Ascending aorta (tissue), 2 donors: ENCODE measurements at regions of chr5 and their contacts with region 1.

Region 1: GRCh38 chr5:44536650-44537260 is 147.5 kb upstream of the FGF10 start:
- DNase-seq: no peak
- H3K4me3 ChIP-seq: no peak overlapping the region
- H3K27ac ChIP-seq: no peak overlapping the region
- H3K4me1 ChIP-seq: no peaks in the 10 kb centered on the region
- H3K27me3 ChIP-seq: no peaks in the 10 kb centered on the region
- CTCF ChIP-seq: peak in 2 of 3 experiments; percentile 29 to 51

Region 2: GRCh38 chr5:44506561-44506960 is 30.2 kb before region 1 on chr5:
- intact Hi-C with region 1: no loop called
- DNase-seq: no peak
- H3K4me3 ChIP-seq: no peak overlapping the region
- H3K27ac ChIP-seq: no peak overlapping the region
- H3K4me1 ChIP-seq: no peaks in the 10 kb centered on the region
- H3K27me3 ChIP-seq: no peaks in the 10 kb centered on the region
- CTCF ChIP-seq: no peak

Region 3: GRCh38 chr5:44774279-44774880 is 237.6 kb after region 1 on chr5:
- intact Hi-C with region 1: loop called (anchors 5 kb)
- DNase-seq: no peak
- H3K4me3 ChIP-seq: no peak overlapping the region
- H3K27ac ChIP-seq: no peak overlapping the region
- H3K4me1 ChIP-seq: no peaks in the 10 kb centered on the region
- H3K27me3 ChIP-seq: no peaks in the 10 kb centered on the region
- CTCF ChIP-seq: peak; percentile 10 to 54 (median 31)

Region 4: GRCh38 chr5:45793638-45794532 is 1257.1 kb after region 1 on chr5:
- intact Hi-C with region 1: no loop called
- DNase-seq: no peak
- H3K4me3 ChIP-seq: no peak overlapping the region
- H3K27ac ChIP-seq: no peak overlapping the region
- H3K4me1 ChIP-seq: no peaks in the 10 kb centered on the region
- H3K27me3 ChIP-seq: no peaks in the 10 kb centered on the region
- CTCF ChIP-seq: no peak